Caco-2 (cell line): ENCODE measurements at regions of chr15 and their contacts with region 1.

Region 1: DNA sequence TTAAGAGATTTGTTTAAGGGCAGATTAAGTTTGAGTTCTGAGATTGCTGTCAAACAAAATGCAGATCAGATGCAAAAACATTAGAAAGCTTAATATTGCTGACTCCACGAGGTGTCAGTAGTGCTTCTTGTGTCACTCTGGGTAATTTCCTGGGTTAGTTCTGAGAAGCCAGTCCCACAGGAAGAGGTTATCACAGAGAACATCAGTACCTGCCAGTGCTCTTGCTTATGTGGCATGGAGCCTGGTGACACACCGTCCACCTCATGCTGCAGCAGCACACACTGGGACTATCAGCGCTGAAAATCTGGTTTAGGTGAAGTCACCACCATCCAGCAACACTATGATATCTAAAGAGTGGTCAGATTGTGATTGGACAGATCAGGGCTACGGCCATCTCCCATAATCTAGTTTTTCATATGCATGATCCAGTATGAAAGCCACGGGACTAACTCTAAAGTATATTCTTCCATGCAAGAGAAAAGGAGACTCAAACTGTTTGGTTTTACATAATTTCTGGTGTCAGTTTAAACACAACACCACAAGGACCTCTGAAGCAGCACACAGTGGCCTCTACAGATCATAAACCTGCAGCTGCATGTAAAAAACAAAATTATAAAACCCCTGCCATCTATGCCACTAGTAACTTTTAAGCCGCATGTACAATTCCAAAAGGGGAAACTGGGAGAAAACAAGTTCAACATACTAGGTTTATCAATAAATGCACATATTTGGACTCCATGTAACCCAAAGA is 36.1 kb upstream of the MYO5C start:
- DNase-seq: peak in 1 of 2 experiments; percentile 30
- H3K4me3 ChIP-seq: no peak overlapping the region
- H3K4me3 Mint-ChIP-seq: no peak overlapping the region
- H3K27ac Mint-ChIP-seq: no peak overlapping the region
- H3K4me1 ChIP-seq: peaks cover 5% of the 10 kb centered on the region; the same call in 1 of the 2 replicates
- H3K4me1 Mint-ChIP-seq: no peaks in the 10 kb centered on the region
- H3K27me3 ChIP-seq: no peaks in the 10 kb centered on the region
- H3K27me3 Mint-ChIP-seq: no peaks in the 10 kb centered on the region
- CTCF ChIP-seq: peak; percentile 45 to 53

Region 2: GRCh38 chr15:52466134-52466701 is 134.6 kb after region 1 on chr15:
- CTCF ChIA-PET with region 1: no interaction called
- POLR2A ChIA-PET with region 1: no interaction called
- intact Hi-C with region 1: loop called (anchors 1 kb)
- DNase-seq: no peak
- H3K4me3 ChIP-seq: no peak overlapping the region
- H3K4me3 Mint-ChIP-seq: no peak overlapping the region
- H3K27ac Mint-ChIP-seq: no peak overlapping the region
- H3K4me1 ChIP-seq: no peaks in the 10 kb centered on the region
- H3K4me1 Mint-ChIP-seq: no peaks in the 10 kb centered on the region
- H3K27me3 ChIP-seq: no peaks in the 10 kb centered on the region
- H3K27me3 Mint-ChIP-seq: no peaks in the 10 kb centered on the region
- CTCF ChIP-seq: no peak

Region 3: GRCh38 chr15:52528991-52529926 is 197.6 kb after region 1 on chr15:
- CTCF ChIA-PET with region 1: no interaction called
- POLR2A ChIA-PET with region 1: no interaction called
- intact Hi-C with region 1: loop called (anchors 2 kb)
- DNase-seq: peak; percentile 49 to 65
- H3K4me3 ChIP-seq: peak overlapping the region; percentile 56
- H3K4me3 Mint-ChIP-seq: peak overlapping the region; percentile 71
- H3K27ac Mint-ChIP-seq: no peak overlapping the region
- H3K4me1 ChIP-seq: peaks cover 6% of the 10 kb centered on the region; the same call in 1 of the 2 replicates
- H3K4me1 Mint-ChIP-seq: peaks cover 7% of the 10 kb centered on the region
- H3K27me3 ChIP-seq: no peaks in the 10 kb centered on the region
- H3K27me3 Mint-ChIP-seq: peaks cover 22% of the 10 kb centered on the region
- CTCF ChIP-seq: no peak

Region 4: GRCh38 chr15:52568601-52569256 is 237.1 kb after region 1 on chr15 and contains the start of gene ARPP19:
- CTCF ChIA-PET with region 1: no interaction called
- POLR2A ChIA-PET with region 1: no interaction called
- intact Hi-C with region 1: loop called (anchors 5 kb)
- DNase-seq: peak; percentile 95 to 96
- H3K4me3 ChIP-seq: peak within 1 kb of the TSS; percentile 56
- H3K4me3 Mint-ChIP-seq: peak within 1 kb of the TSS; percentile 77
- H3K27ac Mint-ChIP-seq: peak within 1 kb of the TSS; percentile 85
- H3K4me1 ChIP-seq: no peaks in the 10 kb centered on the region; the same call in 1 of the 2 replicates
- H3K4me1 Mint-ChIP-seq: peaks cover 7% of the 10 kb centered on the region
- H3K27me3 ChIP-seq: no peaks in the 10 kb centered on the region
- H3K27me3 Mint-ChIP-seq: no peaks in the 10 kb centered on the region
- CTCF ChIP-seq: no peak
- total RNA-seq, gene ARPP19: 164 and 184 TPM in 2 replicates

Region 5: DNA sequence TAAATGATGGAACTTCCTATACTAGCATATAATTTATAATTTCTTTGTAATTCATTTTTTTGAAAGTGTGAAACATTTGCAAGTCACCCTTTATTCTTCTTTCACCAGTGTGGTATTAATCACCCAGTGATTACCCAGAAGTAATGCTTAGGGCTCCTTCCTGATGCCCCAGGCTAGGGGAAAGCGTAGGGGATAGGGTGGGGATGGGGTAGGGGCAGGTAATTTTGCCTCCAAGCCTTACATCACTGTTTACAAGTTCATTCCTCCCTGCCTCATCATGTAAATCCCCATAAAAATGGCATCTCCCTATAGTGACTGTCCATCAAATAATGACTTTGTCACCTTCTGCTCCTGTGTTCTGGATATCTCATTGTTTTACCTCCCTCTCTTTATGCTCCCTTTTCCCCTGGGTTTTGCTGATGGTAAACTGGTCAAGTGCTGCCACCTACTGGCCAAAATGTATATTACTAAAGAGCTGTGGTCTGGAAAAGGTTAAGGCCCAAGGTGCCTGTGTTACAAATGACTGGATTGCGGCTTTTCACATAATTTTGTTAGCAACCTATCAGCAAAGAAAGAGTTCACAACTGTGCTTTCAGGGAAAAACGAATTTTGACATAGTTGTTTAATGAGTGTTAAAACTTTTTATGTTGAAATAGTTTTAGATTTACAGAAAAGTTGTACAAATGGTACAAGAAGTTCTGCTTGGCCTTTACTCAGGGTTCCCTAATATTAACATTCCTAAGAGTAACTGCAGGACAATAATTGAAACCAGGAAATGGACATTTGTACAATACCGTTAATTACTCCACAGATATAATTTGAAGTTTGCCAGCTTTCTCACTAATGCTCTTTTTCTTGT is 403.8 kb after region 1 on chr15:
- CTCF ChIA-PET with region 1: interaction called, 6 read pairs
- POLR2A ChIA-PET with region 1: no interaction called
- intact Hi-C with region 1: loop called (anchors 1 kb)
- DNase-seq: peak; percentile 62 to 83
- H3K4me3 ChIP-seq: no peak overlapping the region
- H3K4me3 Mint-ChIP-seq: no peak overlapping the region
- H3K27ac Mint-ChIP-seq: no peak overlapping the region
- H3K4me1 ChIP-seq: no peaks in the 10 kb centered on the region
- H3K4me1 Mint-ChIP-seq: peaks cover 4% of the 10 kb centered on the region
- H3K27me3 ChIP-seq: no peaks in the 10 kb centered on the region
- H3K27me3 Mint-ChIP-seq: peaks cover 14% of the 10 kb centered on the region
- CTCF ChIP-seq: peak; percentile 47 to 84